CD4-positive, alpha-beta T cell (primary cell): ENCODE measurements at regions of chr1 and their contacts with region 1.

Region 1: GRCh38 chr1:175192630-175193526 is at the start of gene KIAA0040:
- DNase-seq: peak in 13 of 14 experiments; percentile 18 to 81 (median 45)
- ATAC-seq: peak; percentile 57
- H3K4me3 ChIP-seq: peak within 1 kb of the TSS; percentile 98
- H3K4me3 Mint-ChIP-seq: peak within 1 kb of the TSS; percentile 97
- H3K27ac ChIP-seq: peak within 1 kb of the TSS; percentile 60 to 76
- H3K27ac Mint-ChIP-seq: peak within 1 kb of the TSS; percentile 97
- H3K4me1 ChIP-seq: peaks cover 54% of the 10 kb centered on the region
- H3K4me1 Mint-ChIP-seq: peaks cover 56% of the 10 kb centered on the region
- H3K27me3 ChIP-seq: no peaks in the 10 kb centered on the region
- H3K27me3 Mint-ChIP-seq: no peaks in the 10 kb centered on the region
- CTCF ChIP-seq: no peak
- total RNA-seq, gene KIAA0040: 13.5 to 14.5 TPM

Region 2: DNA sequence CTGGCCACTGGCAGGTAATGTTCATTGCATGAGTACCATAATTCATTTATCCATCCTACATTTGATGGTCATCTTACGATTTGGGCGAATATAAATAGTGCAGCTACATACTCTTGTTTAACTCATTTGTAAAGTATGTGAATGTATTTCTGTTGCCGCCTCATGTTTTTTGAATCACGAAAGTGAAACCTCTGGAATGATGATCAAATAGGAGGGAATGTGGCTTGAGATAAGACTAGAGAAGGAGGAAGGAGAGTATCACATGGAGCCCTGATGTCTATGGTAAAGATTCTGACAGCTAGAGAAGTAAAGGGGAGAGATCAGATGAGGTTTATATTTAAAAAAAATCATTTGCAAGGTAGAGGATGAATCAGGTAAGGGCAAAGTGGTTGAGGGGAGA is 177.6 kb before region 1 on chr1:
- CTCF ChIA-PET with region 1: no interaction called
- POLR2A ChIA-PET with region 1: no interaction called
- intact Hi-C with region 1: no loop called
- DNase-seq: no peak
- ATAC-seq: no peak
- H3K4me3 ChIP-seq: no peak overlapping the region
- H3K4me3 Mint-ChIP-seq: no peak overlapping the region
- H3K27ac ChIP-seq: no peak overlapping the region
- H3K27ac Mint-ChIP-seq: no peak overlapping the region
- H3K4me1 ChIP-seq: no peaks in the 10 kb centered on the region
- H3K4me1 Mint-ChIP-seq: no peaks in the 10 kb centered on the region
- H3K27me3 ChIP-seq: no peaks in the 10 kb centered on the region
- H3K27me3 Mint-ChIP-seq: no peaks in the 10 kb centered on the region
- CTCF ChIP-seq: no peak

Region 3: DNA sequence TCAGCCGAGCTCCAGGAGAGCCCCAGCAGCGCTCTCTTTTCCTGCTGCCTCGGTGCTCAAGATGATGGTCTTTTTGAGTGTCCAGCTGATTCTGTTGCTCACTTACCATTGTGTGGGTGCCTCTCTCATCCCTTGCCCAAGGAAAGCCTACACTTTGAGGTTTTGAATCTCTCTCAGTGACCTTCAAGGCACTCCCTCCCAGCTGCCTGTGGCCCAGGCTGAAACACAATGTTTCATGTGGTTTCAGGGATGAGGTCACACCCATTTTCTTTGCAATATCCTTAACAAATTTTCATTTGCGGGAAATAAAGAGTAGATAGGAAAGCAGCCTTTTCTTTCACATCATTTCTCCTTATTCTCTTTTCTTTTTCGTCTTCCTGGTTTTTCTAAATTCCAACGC is 157.0 kb before region 1 on chr1:
- CTCF ChIA-PET with region 1: no interaction called
- POLR2A ChIA-PET with region 1: no interaction called
- intact Hi-C with region 1: loop called in 1 of 2 experiments (anchors 5 kb)
- DNase-seq: no peak
- ATAC-seq: no peak
- H3K4me3 ChIP-seq: no peak overlapping the region
- H3K4me3 Mint-ChIP-seq: no peak overlapping the region
- H3K27ac ChIP-seq: no peak overlapping the region
- H3K27ac Mint-ChIP-seq: no peak overlapping the region
- H3K4me1 ChIP-seq: no peaks in the 10 kb centered on the region
- H3K4me1 Mint-ChIP-seq: no peaks in the 10 kb centered on the region
- H3K27me3 ChIP-seq: no peaks in the 10 kb centered on the region
- H3K27me3 Mint-ChIP-seq: no peaks in the 10 kb centered on the region
- CTCF ChIP-seq: no peak

Region 4: GRCh38 chr1:175208773-175209492 is 16.1 kb after region 1 on chr1:
- CTCF ChIA-PET with region 1: interaction called, 4 read pairs
- POLR2A ChIA-PET with region 1: interaction called, 98 read pairs
- intact Hi-C with region 1: loop called (anchors 1 to 2 kb)
- DNase-seq: peak; percentile 28 to 90 (median 44)
- ATAC-seq: peak; percentile 92
- H3K4me3 ChIP-seq: peak overlapping the region; percentile 25
- H3K4me3 Mint-ChIP-seq: peak overlapping the region; percentile 86
- H3K27ac ChIP-seq: peak overlapping the region; percentile 37 to 56
- H3K27ac Mint-ChIP-seq: peak overlapping the region; percentile 86
- H3K4me1 ChIP-seq: peaks cover 37% of the 10 kb centered on the region
- H3K4me1 Mint-ChIP-seq: peaks cover 86% of the 10 kb centered on the region
- H3K27me3 ChIP-seq: no peaks in the 10 kb centered on the region
- H3K27me3 Mint-ChIP-seq: no peaks in the 10 kb centered on the region
- CTCF ChIP-seq: no peak

Region 5: DNA sequence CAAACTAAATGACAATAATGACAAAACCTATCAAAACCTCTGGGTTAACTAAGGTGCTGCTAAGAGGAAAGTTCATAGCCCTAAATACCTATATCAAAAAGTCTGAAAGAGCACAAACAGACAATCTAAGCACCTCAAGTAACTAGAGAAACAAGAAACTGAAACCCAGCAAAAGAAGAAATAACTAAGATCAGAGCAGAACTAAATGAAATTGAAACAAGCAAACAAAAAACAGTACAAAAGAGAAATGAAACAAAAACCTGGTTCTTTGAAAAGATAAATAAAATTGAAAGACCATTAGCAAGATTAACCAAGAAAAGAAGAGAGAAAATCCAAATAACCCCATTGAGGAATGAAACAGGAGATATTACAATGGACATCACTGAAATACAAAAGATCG is 44.5 kb after region 1 on chr1:
- CTCF ChIA-PET with region 1: no interaction called
- POLR2A ChIA-PET with region 1: no interaction called
- intact Hi-C with region 1: loop called in 1 of 2 experiments (anchors 10 kb)
- DNase-seq: no peak
- ATAC-seq: no peak
- H3K4me3 ChIP-seq: no peak overlapping the region
- H3K4me3 Mint-ChIP-seq: no peak overlapping the region
- H3K27ac ChIP-seq: no peak overlapping the region
- H3K27ac Mint-ChIP-seq: no peak overlapping the region
- H3K4me1 ChIP-seq: peaks cover 9% of the 10 kb centered on the region
- H3K4me1 Mint-ChIP-seq: peaks cover 15% of the 10 kb centered on the region
- H3K27me3 ChIP-seq: no peaks in the 10 kb centered on the region
- H3K27me3 Mint-ChIP-seq: no peaks in the 10 kb centered on the region
- CTCF ChIP-seq: no peak

Region 6: GRCh38 chr1:175297291-175297690 is 104.4 kb after region 1 on chr1:
- CTCF ChIA-PET with region 1: no interaction called
- POLR2A ChIA-PET with region 1: interaction called, 3 read pairs
- intact Hi-C with region 1: loop called in 1 of 2 experiments (anchors 5 kb)
- DNase-seq: peak in 3 of 14 experiments; percentile 43 to 60 (median 51)
- ATAC-seq: peak; percentile 95
- H3K4me3 ChIP-seq: no peak overlapping the region
- H3K4me3 Mint-ChIP-seq: peak overlapping the region; percentile 54
- H3K27ac ChIP-seq: no peak overlapping the region
- H3K27ac Mint-ChIP-seq: no peak overlapping the region
- H3K4me1 ChIP-seq: peaks cover 9% of the 10 kb centered on the region
- H3K4me1 Mint-ChIP-seq: peaks cover 48% of the 10 kb centered on the region
- H3K27me3 ChIP-seq: peaks cover 0 to 3% of the 10 kb centered on the region in 2 experiments
- H3K27me3 Mint-ChIP-seq: peaks cover 5% of the 10 kb centered on the region
- CTCF ChIP-seq: no peak